ENCODE measurements at regions of chr1 and their contacts with region 1.

Region 1: GRCh38 chr1:23959041-23959460 is 577 bp upstream of the PNRC2 start:
- DNase-seq: peak; percentile 98
- H3K4me3 ChIP-seq: peak overlapping the region; percentile 91
- H3K27ac ChIP-seq: peak overlapping the region; percentile 97
- H3K4me1 ChIP-seq: peaks cover 64% of the 10 kb centered on the region
- CTCF ChIP-seq: peak; percentile 69

Region 2: DNA sequence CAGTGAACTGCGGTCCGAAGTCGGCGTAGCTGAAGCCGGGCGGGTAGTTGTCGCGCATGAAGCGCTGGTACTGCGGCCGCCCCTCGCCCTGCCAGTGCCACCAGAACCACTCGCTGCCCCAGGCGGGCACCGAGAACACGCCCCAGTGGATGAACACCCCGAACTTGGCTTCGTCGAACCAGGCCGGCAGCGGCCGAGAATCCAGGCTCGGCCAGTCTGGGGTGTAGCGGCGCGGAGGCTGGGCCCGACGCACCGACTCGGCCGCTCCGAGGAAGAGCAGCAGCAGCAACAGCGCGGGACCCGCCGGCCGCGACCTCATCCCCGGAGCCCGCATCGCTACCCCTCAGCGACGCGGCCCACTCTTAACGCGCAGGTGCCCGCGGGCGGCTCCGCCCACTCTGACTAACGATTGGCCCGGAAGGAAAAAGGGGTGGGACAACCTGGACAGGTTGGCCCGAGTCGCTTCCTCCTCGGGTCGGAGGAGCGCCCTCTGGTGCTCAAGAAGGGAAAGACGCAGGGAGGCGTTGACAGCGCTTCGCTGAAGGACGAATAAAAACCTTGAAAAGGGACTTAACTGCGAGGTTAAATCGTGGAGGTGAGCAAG is 91.0 kb before region 1 on chr1 and contains the start of gene FUCA1:
- CTCF ChIA-PET with region 1: interaction called, 5 read pairs
- POLR2A ChIA-PET with region 1: interaction called, 3 read pairs
- intact Hi-C with region 1: loop called (anchors 5 kb)
- DNase-seq: peak; percentile 97
- H3K4me3 ChIP-seq: peak within 1 kb of the TSS; percentile 74
- H3K27ac ChIP-seq: peak within 1 kb of the TSS; percentile 21
- H3K4me1 ChIP-seq: peaks cover 25% of the 10 kb centered on the region
- CTCF ChIP-seq: peak; percentile 82
- total RNA-seq, gene FUCA1: 9.1 and 9.3 TPM in 2 replicates

Region 3: GRCh38 chr1:23878668-23879067 is 80.4 kb before region 1 on chr1:
- CTCF ChIA-PET with region 1: no interaction called
- POLR2A ChIA-PET with region 1: no interaction called
- intact Hi-C with region 1: no loop called
- DNase-seq: peak; percentile 27
- H3K4me3 ChIP-seq: no peak overlapping the region
- H3K27ac ChIP-seq: no peak overlapping the region
- H3K4me1 ChIP-seq: no peaks in the 10 kb centered on the region
- CTCF ChIP-seq: no peak

Region 4: DNA sequence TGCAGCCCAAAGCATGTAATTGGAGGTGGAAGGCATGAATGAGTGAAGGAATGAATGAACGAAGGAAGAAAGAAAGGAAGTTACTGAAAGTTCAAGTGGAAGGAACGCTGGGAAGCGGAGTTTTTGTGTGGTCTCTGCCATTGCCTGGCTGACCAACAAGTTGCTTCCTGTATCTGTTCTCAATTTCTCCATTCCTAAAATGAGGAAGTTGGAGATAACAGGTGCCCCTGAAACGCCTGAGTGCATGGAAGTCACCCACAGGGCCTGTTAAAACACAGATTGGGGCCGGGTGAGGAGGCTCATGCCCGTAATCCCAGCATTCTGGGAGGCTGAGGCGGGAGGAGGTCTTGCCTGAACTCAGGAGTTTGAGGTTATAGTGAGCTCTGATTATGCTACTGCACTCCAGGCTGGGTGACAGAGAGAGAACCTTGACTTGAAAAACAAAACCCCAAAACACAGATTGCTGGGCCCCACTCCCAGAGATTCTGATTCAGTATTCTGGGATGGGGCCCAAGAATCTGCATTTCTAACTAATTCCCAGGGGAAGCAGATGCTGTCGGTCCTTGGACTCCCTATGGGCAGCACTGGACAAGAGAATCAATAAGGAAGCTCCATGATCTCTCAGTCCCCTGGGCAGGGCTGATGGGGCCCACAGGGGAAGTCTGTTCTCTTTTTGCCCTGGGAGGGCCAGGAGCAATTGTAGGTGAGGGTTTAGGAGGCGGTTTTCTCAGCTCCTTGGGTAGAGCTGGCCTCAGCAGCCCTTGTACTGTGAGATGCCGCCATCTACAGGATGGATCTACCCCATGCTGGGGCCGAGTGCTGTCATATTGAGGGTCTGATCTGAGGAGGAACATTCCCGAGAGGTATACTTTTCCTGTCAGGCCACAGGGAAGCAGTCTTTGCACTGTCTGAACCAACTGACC is 42.6 kb before region 1 on chr1:
- CTCF ChIA-PET with region 1: interaction called, 3 read pairs
- POLR2A ChIA-PET with region 1: interaction called, 10 read pairs
- intact Hi-C with region 1: loop called (anchors 2 kb)
- DNase-seq: peak; percentile 93
- H3K4me3 ChIP-seq: peak overlapping the region; percentile 29
- H3K27ac ChIP-seq: peak overlapping the region; percentile 71
- H3K4me1 ChIP-seq: peaks cover 76% of the 10 kb centered on the region
- CTCF ChIP-seq: peak; percentile 97

Region 5: DNA sequence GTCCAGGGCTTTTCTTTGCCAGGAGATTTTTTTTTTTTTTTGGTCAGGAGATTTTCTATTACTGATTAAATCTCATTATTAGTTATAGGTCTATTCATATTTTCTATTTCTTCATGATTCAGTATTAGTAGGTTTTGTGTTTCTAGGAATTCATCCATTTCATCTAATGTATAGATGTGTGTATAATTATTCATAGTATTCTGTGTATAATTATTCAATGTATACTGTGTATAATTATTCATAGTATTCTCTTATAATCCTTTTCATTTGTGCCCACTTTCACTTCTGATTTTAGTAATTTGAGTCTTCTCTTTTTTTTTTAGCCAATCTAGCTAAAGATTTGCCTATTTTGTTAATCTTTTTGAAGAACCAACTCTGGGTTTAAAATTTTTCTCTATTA is 11.7 kb before region 1 on chr1:
- CTCF ChIA-PET with region 1: no interaction called
- POLR2A ChIA-PET with region 1: interaction called, 17 read pairs
- intact Hi-C with region 1: no loop called
- DNase-seq: no peak
- H3K4me3 ChIP-seq: no peak overlapping the region
- H3K27ac ChIP-seq: no peak overlapping the region
- H3K4me1 ChIP-seq: peaks cover 16% of the 10 kb centered on the region
- CTCF ChIP-seq: no peak

Region 6: GRCh38 chr1:24027838-24028468 is 68.9 kb after region 1 on chr1:
- CTCF ChIA-PET with region 1: no interaction called
- POLR2A ChIA-PET with region 1: interaction called, 5 read pairs
- intact Hi-C with region 1: loop called (anchors 2 kb)
- DNase-seq: peak; percentile 58
- H3K4me3 ChIP-seq: no peak overlapping the region
- H3K27ac ChIP-seq: no peak overlapping the region
- H3K4me1 ChIP-seq: no peaks in the 10 kb centered on the region
- CTCF ChIP-seq: peak; percentile 85